OCI-LY7 (cell line): ENCODE measurements at regions of chr16 and their contacts with region 1.

Region 1: DNA sequence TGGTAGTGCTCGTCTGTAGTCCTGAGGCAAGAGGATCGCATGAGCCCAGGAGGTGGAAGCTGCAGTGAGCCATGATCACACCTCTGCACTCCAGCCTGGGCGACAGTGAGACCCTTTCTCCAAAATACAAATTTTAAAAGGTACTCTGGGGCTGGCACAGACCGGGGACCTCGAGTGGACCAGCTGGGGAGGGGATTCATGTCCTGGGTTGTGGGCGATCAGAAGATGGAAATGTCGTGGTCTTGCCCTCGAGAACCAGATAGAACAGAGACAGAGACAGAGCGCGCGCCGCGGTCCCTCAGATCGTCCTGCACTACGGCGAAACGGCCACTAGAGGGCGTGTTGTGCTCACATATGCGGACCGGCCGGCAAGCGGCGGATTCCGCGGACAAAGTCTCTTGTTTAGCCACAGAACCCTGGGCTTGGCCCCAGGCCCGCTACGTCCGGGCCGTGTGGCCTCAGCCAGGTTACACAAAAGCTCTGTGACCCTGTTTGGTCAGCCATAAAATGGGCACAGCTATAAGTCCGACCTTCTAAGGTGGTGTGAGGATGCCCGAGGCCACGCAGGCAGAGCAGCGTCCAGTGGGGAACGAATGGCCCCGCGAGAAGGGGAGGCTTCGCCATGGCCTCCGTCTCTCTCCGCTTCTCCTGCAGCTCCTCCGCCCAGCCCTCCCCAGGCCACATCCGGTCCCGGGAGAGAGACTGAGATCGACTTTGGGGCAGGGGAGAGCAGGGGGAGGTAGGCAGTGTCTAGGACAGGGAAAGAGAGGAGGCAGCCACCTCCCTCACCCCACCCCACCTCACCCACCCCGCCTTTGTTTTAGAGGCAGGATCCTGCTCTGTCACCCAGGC is 14.6 kb upstream of the SBK1 start:
- DNase-seq: peak; percentile 84
- H3K4me3 ChIP-seq: peak overlapping the region; percentile 59
- H3K27ac ChIP-seq: no peak overlapping the region
- H3K4me1 ChIP-seq: peaks cover 7% of the 10 kb centered on the region
- CTCF ChIP-seq: peak; percentile 95

Region 2: GRCh38 chr16:28317040-28317880 is 39.5 kb after region 1 on chr16:
- CTCF ChIA-PET with region 1: interaction called, 13 read pairs
- POLR2A ChIA-PET with region 1: no interaction called
- intact Hi-C with region 1: loop called (anchors 1 kb)
- DNase-seq: peak; percentile 73
- H3K4me3 ChIP-seq: no peak overlapping the region
- H3K27ac ChIP-seq: no peak overlapping the region
- H3K4me1 ChIP-seq: no peaks in the 10 kb centered on the region
- CTCF ChIP-seq: peak; percentile 92

Region 3: GRCh38 chr16:28623172-28623711 is 345.5 kb after region 1 on chr16:
- CTCF ChIA-PET with region 1: no interaction called
- POLR2A ChIA-PET with region 1: no interaction called
- intact Hi-C with region 1: no loop called
- DNase-seq: peak; percentile 94
- H3K4me3 ChIP-seq: peak overlapping the region; percentile 92
- H3K27ac ChIP-seq: peak overlapping the region; percentile 60
- H3K4me1 ChIP-seq: peaks cover 43% of the 10 kb centered on the region
- CTCF ChIP-seq: no peak